ENCODE measurements at regions of chr2 and their contacts with region 1.

Region 1: DNA sequence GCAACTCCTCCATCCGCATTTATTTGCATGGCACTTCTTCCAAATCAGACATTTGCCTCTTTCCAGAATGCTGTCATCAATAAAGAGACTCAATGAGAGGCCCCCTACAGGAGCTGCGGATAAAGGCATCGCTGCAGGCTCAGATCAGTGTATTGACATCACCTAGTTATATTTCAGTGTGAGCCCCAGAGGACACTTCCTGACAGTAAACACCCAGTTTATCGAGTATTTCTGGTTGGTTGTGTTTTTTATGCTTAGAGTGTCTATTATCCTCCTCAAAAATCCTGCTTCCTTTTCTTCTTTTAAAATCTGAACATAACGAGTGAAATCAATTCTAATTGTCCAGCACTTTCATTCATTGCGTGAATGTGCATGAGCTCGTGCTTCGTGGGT is 38.8 kb downstream of the NRP2 start:
- DNase-seq: peak; percentile 34
- ATAC-seq: peak; percentile 66
- H3K4me3 Mint-ChIP-seq: peak overlapping the region; percentile 30; the same call in 1 of the 2 replicates
- H3K27ac Mint-ChIP-seq: peak overlapping the region; percentile 90
- H3K4me1 Mint-ChIP-seq: peaks cover 42% of the 10 kb centered on the region
- H3K27me3 Mint-ChIP-seq: no peaks in the 10 kb centered on the region
- CTCF ChIP-seq: no peak

Region 2: GRCh38 chr2:205686783-205687640 is 34.0 kb before region 1 on chr2:
- CTCF ChIA-PET with region 1: interaction called, 41 read pairs
- POLR2A ChIA-PET with region 1: interaction called, 11 read pairs
- DNase-seq: no peak
- ATAC-seq: peak; percentile 4; the same call in 1 of the 2 replicates
- H3K4me3 Mint-ChIP-seq: peak overlapping the region; percentile 78
- H3K27ac Mint-ChIP-seq: no peak overlapping the region
- H3K4me1 Mint-ChIP-seq: peaks cover 54% of the 10 kb centered on the region
- H3K27me3 Mint-ChIP-seq: peaks cover 60% of the 10 kb centered on the region
- CTCF ChIP-seq: no peak

Region 3: DNA sequence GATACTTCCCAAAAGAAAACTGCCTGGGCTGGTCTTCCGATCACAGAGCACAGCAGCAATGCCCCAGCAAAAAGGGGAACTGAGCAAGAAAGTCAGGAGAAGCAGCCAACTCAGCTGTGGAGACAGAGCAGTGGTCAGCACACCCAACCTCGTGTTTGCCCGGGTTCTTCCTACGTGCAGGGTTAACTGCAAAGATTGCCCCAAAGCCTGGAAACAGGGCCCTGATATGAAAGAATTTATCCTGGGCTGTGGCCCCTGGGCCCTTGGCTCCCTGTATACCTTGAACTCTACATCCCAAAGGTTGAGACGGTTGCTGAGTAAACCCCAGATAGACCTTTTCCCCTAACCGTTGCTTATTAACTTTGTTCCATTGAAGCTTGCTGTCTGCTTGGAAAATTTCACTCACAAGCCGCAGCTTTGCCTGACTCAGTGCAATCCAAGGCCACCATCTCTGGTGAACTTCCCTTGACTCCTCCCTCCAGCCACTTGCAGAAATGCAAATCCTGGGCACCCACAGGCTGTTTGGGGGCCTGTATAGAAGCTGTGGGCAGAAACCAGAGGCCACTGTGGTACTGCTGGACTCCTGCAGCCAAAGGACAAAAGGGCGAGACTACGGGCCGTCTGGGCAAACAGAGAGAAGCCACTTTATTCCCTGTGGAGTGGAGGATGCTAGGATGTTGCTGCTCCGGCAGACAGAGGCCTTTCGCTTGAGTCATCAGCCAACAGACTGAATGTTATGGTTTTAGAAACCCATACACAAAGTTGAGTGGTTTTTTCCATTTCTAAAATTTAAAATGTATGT is 20.5 kb before region 1 on chr2:
- CTCF ChIA-PET with region 1: interaction called, 15 read pairs
- POLR2A ChIA-PET with region 1: no interaction called
- DNase-seq: no peak
- ATAC-seq: peak; percentile 65
- H3K4me3 Mint-ChIP-seq: no peak overlapping the region
- H3K27ac Mint-ChIP-seq: peak overlapping the region; percentile 81
- H3K4me1 Mint-ChIP-seq: peaks cover 82% of the 10 kb centered on the region
- H3K27me3 Mint-ChIP-seq: no peaks in the 10 kb centered on the region
- CTCF ChIP-seq: no peak

Region 4: GRCh38 chr2:205734436-205735037 is 13.5 kb after region 1 on chr2:
- CTCF ChIA-PET with region 1: interaction called, 32 read pairs
- POLR2A ChIA-PET with region 1: no interaction called
- DNase-seq: no peak
- ATAC-seq: peak; percentile 52
- H3K4me3 Mint-ChIP-seq: no peak overlapping the region
- H3K27ac Mint-ChIP-seq: peak overlapping the region; percentile 93
- H3K4me1 Mint-ChIP-seq: peaks cover 60% of the 10 kb centered on the region
- H3K27me3 Mint-ChIP-seq: no peaks in the 10 kb centered on the region
- CTCF ChIP-seq: no peak

Region 5: DNA sequence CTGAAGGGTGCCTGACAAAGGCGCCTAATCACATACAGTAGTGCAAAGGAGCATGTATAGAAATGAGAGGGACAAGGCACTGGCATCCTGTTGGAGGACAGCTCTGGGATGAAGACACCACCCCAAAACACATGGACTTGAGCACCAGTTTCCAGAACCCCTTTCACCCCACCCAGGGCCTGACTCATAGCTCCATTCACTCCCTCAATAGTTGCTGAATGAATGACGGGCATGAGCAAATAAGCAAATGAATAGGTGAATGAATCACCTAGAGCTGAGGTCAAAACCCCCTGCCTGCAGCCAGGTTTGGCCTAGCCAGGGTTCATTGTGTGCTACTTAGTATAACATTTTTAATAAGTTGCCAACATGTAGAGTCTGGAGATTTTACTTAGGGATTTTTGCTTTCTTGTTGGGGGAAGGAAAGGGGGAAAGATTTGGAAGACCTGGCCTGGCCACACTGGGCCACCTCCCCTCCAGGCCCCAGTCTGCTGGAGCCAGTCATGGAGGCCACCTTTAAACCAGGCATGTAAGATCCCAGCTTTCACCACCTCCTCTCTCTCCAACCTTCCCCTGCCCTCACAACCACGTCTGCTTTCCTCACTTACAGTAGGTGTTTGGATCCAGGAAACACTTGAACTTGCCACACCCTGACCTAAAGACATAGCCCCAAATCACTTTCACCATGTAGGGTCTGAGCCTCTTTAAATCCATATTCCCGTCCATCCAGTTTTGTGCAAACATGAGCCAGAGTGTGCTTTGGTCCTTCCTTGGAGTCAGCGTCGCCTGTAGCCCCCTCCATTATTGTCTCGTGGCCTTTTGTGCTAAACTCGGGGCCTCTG is 27.8 kb after region 1 on chr2:
- CTCF ChIA-PET with region 1: interaction called, 10 read pairs
- POLR2A ChIA-PET with region 1: no interaction called
- DNase-seq: no peak
- ATAC-seq: peak; percentile 87
- H3K4me3 Mint-ChIP-seq: no peak overlapping the region
- H3K27ac Mint-ChIP-seq: peak overlapping the region; percentile 35; the same call in 1 of the 2 replicates
- H3K4me1 Mint-ChIP-seq: peaks cover 30% of the 10 kb centered on the region
- H3K27me3 Mint-ChIP-seq: no peaks in the 10 kb centered on the region
- CTCF ChIP-seq: no peak

Region 6: GRCh38 chr2:205808486-205809121 is 87.6 kb after region 1 on chr2:
- CTCF ChIA-PET with region 1: no interaction called
- POLR2A ChIA-PET with region 1: no interaction called
- DNase-seq: no peak
- ATAC-seq: no peak
- H3K4me3 Mint-ChIP-seq: no peak overlapping the region
- H3K27ac Mint-ChIP-seq: no peak overlapping the region
- H3K4me1 Mint-ChIP-seq: peaks cover 23% of the 10 kb centered on the region
- H3K27me3 Mint-ChIP-seq: peaks cover 2% of the 10 kb centered on the region; the same call in 1 of the 2 replicates
- CTCF ChIP-seq: no peak